CD14-positive monocyte (primary cell): ENCODE measurements at regions of chr12 and their contacts with region 1.

Region 1: DNA sequence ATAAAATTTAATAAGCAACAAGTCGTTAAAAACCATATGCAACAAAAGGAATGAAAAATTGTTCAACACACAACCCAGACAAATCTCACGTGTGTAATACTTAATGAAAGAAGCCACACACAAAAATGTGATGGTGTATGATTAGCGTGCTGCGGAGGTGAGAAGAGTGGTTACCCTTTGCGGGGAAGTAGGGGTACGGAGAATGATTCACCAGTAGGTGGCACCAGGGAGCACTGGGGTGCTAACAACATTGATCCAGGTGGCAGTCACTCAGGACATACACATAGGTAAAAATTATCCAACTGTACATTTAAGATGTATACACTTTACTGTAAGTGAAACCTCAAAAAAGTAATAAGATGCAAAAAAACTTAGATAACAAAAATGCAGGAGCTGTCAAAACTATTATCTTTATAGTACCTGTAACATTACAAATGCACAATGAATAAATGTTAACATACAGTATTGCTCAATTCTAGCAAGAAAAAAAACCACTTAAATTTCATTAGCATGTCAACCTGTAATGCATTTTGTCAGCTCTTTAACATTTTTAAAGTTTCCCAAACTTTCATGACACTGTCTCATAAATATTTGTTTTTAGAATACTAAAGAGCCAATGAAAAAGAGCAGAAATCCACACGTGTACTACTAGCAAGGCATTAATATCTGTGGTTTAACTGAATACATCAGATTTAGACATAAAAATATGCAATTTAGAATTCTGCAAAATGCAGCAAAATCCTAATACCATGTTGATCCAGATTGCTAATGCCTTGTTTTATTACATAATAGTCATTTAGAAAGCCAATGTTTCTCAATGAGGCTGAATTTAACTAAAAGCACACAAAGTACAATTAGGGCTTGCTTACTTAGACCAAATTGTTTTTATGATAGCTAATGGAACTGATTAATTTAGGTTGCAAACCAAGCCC is 46.7 kb downstream of the TMCC3 start:
- DNase-seq: peak; percentile 18 to 54 (median 51)
- H3K4me3 ChIP-seq: no peak overlapping the region
- H3K4me3 Mint-ChIP-seq: no peak overlapping the region
- H3K27ac ChIP-seq: no peak overlapping the region
- H3K27ac Mint-ChIP-seq: no peak overlapping the region
- H3K4me1 ChIP-seq: no peaks in the 10 kb centered on the region
- H3K4me1 Mint-ChIP-seq: no peaks in the 10 kb centered on the region
- H3K27me3 ChIP-seq: no peaks in the 10 kb centered on the region
- H3K27me3 Mint-ChIP-seq: peaks cover 2 to 13% (median 3%) of the 10 kb centered on the region in 3 donors
- CTCF ChIP-seq: peak; percentile 82

Region 2: GRCh38 chr12:94644141-94644979 is 40.7 kb after region 1 on chr12:
- intact Hi-C with region 1: loop called in 1 of 2 experiments (anchors 5 kb)
- DNase-seq: peak; percentile 82 to 95 (median 91)
- H3K4me3 ChIP-seq: peak overlapping the region; percentile 26 to 70 (median 40)
- H3K4me3 Mint-ChIP-seq: peak overlapping the region; percentile 73 to 89
- H3K27ac ChIP-seq: peak overlapping the region; percentile 93 to 94
- H3K27ac Mint-ChIP-seq: peak overlapping the region; percentile 97 to 100 (median 97)
- H3K4me1 ChIP-seq: peaks cover 54 to 65% of the 10 kb centered on the region in 2 donors
- H3K4me1 Mint-ChIP-seq: peaks cover 78% of the 10 kb centered on the region
- H3K27me3 ChIP-seq: peaks cover 25 to 28% of the 10 kb centered on the region in 2 donors
- H3K27me3 Mint-ChIP-seq: peaks cover 32 to 40% (median 35%) of the 10 kb centered on the region in 3 donors
- CTCF ChIP-seq: no peak

Region 3: GRCh38 chr12:94725375-94726168 is 121.9 kb after region 1 on chr12:
- intact Hi-C with region 1: loop called in 1 of 2 experiments (anchors 5 kb)
- DNase-seq: peak; percentile 52 to 66 (median 65)
- H3K4me3 ChIP-seq: no peak overlapping the region
- H3K4me3 Mint-ChIP-seq: no peak overlapping the region
- H3K27ac ChIP-seq: no peak overlapping the region
- H3K27ac Mint-ChIP-seq: peak overlapping the region in 3 of 7 donors; percentile 35 to 68 (median 66)
- H3K4me1 ChIP-seq: peaks cover 7 to 9% of the 10 kb centered on the region in 2 donors
- H3K4me1 Mint-ChIP-seq: peaks cover 13% of the 10 kb centered on the region
- H3K27me3 ChIP-seq: no peaks in the 10 kb centered on the region
- H3K27me3 Mint-ChIP-seq: peaks cover 4 to 10% (median 7%) of the 10 kb centered on the region in 3 donors
- CTCF ChIP-seq: peak; percentile 59